A673 (cell line): ENCODE measurements at regions of chr4 and their contacts with region 1.

Region 1: DNA sequence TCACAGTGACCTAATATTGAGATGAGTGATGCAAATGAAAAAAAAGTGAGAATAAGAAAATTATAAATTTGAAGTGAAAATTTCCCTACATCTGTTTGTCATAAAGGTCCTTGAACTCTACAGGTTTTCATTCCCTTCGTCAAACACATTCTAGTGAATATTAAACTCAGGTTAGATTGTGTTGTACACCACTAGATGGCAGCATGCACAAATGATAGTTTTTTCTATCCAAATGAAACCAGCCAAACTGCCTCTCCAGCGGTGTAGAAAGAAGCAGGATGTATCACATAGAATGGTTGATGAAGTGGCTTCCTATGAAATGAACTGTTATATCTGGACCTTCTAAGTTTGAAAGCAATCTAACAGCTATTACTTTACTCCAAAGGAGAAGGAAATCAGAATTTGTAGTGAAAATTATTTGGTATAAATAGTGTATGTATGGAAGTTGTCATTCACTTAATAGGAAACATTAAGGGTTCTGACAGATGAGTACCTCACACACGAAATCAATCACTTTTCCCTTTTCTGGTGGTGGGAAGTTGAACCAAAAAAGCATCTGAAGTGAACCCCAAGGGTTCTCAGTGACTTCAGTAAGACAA is 382.7 kb downstream of the UNC5C start:
- DNase-seq: peak; percentile 56
- H3K4me3 ChIP-seq: no peak overlapping the region
- H3K27ac ChIP-seq: no peak overlapping the region
- H3K4me1 ChIP-seq: no peaks in the 10 kb centered on the region
- H3K27me3 ChIP-seq: no peaks in the 10 kb centered on the region
- CTCF ChIP-seq: peak; percentile 53

Region 2: GRCh38 chr4:95151255-95151654 is 14.8 kb before region 1 on chr4:
- CTCF ChIA-PET with region 1: no interaction called
- POLR2A ChIA-PET with region 1: no interaction called
- intact Hi-C with region 1: loop called (anchors 1 kb)
- DNase-seq: no peak
- H3K4me3 ChIP-seq: no peak overlapping the region
- H3K27ac ChIP-seq: no peak overlapping the region
- H3K4me1 ChIP-seq: no peaks in the 10 kb centered on the region
- H3K27me3 ChIP-seq: no peaks in the 10 kb centered on the region
- CTCF ChIP-seq: no peak

Region 3: DNA sequence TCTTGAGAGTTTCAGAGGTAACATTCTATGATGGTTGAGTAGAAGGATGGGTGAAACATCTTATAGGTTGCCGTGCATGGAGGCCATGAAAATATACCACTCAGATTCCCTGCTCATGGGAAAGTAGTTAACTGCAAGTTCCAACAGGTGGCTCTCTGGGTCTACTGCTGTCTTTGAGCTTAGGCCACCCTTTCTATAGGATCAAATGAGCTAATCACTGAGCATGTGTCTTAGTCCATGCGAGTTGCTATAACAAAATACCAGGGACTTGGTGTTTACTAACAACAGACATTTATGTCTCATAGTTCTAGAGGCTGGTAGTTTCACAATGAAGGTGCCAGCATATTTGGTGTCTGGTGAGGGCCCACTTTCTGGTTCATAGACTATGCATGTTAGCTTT is 527.6 kb after region 1 on chr4:
- CTCF ChIA-PET with region 1: no interaction called
- POLR2A ChIA-PET with region 1: no interaction called
- intact Hi-C with region 1: loop called (anchors 10 kb)
- DNase-seq: peak; percentile 42
- H3K4me3 ChIP-seq: no peak overlapping the region
- H3K27ac ChIP-seq: no peak overlapping the region
- H3K4me1 ChIP-seq: no peaks in the 10 kb centered on the region
- H3K27me3 ChIP-seq: no peaks in the 10 kb centered on the region
- CTCF ChIP-seq: peak; percentile 49

Region 4: GRCh38 chr4:96039803-96040436 is 873.9 kb after region 1 on chr4:
- CTCF ChIA-PET with region 1: no interaction called
- POLR2A ChIA-PET with region 1: no interaction called
- intact Hi-C with region 1: loop called (anchors 10 kb)
- DNase-seq: no peak
- H3K4me3 ChIP-seq: no peak overlapping the region
- H3K27ac ChIP-seq: no peak overlapping the region
- H3K4me1 ChIP-seq: no peaks in the 10 kb centered on the region
- H3K27me3 ChIP-seq: no peaks in the 10 kb centered on the region
- CTCF ChIP-seq: no peak

Region 5: GRCh38 chr4:96352051-96352517 is 1186.1 kb after region 1 on chr4:
- CTCF ChIA-PET with region 1: no interaction called
- POLR2A ChIA-PET with region 1: no interaction called
- intact Hi-C with region 1: loop called (anchors 5 kb)
- DNase-seq: peak; percentile 22
- H3K4me3 ChIP-seq: no peak overlapping the region
- H3K27ac ChIP-seq: no peak overlapping the region
- H3K4me1 ChIP-seq: no peaks in the 10 kb centered on the region
- H3K27me3 ChIP-seq: no peaks in the 10 kb centered on the region
- CTCF ChIP-seq: peak; percentile 45; the same call in 1 of the 2 replicates